MCF 10A (cell line): ENCODE measurements at regions of chr2 and their contacts with region 1.

Region 1: GRCh38 chr2:112726497-112727190 is 5.8 kb downstream of the NT5DC4 start:
- DNase-seq: peak; percentile 94
- H3K4me3 Mint-ChIP-seq: no peak overlapping the region
- H3K27ac Mint-ChIP-seq: no peak overlapping the region
- H3K4me1 Mint-ChIP-seq: no peaks in the 10 kb centered on the region
- H3K27me3 Mint-ChIP-seq: no peaks in the 10 kb centered on the region
- CTCF ChIP-seq: peak; percentile 98

Region 2: DNA sequence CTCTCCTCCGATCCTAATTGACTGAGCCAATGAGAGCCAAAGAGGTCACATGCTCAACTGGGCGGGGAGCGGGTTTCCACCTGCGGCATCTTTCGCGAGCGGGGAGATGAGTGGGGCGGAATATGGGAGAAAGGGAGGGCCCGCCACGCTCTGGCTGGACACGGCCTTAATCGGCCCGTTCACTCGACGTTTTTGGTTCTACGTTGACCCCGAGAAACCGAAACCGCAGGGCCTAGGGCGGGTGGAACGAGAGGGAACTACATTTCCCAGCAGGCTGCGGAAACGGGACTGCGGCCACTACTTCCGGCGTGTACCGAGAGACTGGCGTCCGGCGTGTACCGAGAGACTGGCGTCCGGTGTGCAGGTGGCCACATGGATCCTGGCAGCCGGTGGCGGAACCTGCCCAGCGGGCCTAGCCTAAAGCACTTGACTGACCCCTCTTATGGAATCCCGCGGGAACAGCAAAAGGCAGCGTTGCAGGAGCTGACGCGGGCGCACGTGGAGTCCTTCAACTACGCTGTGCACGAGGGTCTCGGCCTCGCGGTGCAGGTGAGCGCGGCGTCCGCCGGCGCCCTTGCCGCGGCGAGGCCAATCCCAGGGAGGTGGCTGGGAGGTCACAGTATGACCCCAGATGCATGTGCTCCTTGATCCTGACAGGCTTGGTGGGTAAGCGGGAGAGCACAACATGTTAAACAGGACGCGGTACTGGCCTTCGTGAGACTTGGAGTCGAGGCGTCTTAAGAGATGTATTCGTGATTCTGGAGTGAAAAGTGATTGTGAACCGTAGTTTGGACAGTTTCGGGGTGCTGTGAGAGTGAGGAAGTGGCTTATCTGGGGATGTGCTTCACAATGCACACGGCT is 184.3 kb before region 1 on chr2 and contains the start of gene POLR1B:
- CTCF ChIA-PET with region 1: interaction called, 3 read pairs
- POLR2A ChIA-PET with region 1: no interaction called
- intact Hi-C with region 1: loop called (anchors 2 kb)
- DNase-seq: peak; percentile 90
- H3K4me3 Mint-ChIP-seq: no peak within 1 kb of the TSS
- H3K27ac Mint-ChIP-seq: no peak within 1 kb of the TSS
- H3K4me1 Mint-ChIP-seq: peaks cover 11% of the 10 kb centered on the region
- H3K27me3 Mint-ChIP-seq: no peaks in the 10 kb centered on the region
- CTCF ChIP-seq: no peak
- total RNA-seq, gene POLR1B: 51.6 and 74.0 TPM in 2 replicates

Region 3: GRCh38 chr2:112606488-112606902 is 120.1 kb before region 1 on chr2:
- CTCF ChIA-PET with region 1: interaction called, 210 read pairs
- POLR2A ChIA-PET with region 1: interaction called, 15 read pairs
- intact Hi-C with region 1: no loop called
- DNase-seq: no peak
- H3K4me3 Mint-ChIP-seq: no peak overlapping the region
- H3K27ac Mint-ChIP-seq: no peak overlapping the region
- H3K4me1 Mint-ChIP-seq: peaks cover 4% of the 10 kb centered on the region
- H3K27me3 Mint-ChIP-seq: no peaks in the 10 kb centered on the region
- CTCF ChIP-seq: no peak

Region 4: GRCh38 chr2:112645310-112646101 is 81.1 kb before region 1 on chr2 and contains the start of gene SLC20A1:
- CTCF ChIA-PET with region 1: interaction called, 50 read pairs
- POLR2A ChIA-PET with region 1: interaction called, 49 read pairs
- intact Hi-C with region 1: loop called (anchors 1 kb)
- DNase-seq: peak; percentile 93
- H3K4me3 Mint-ChIP-seq: peak within 1 kb of the TSS; percentile 77
- H3K27ac Mint-ChIP-seq: peak within 1 kb of the TSS; percentile 94
- H3K4me1 Mint-ChIP-seq: peaks cover 48% of the 10 kb centered on the region
- H3K27me3 Mint-ChIP-seq: no peaks in the 10 kb centered on the region
- CTCF ChIP-seq: peak; percentile 37
- total RNA-seq, gene SLC20A1: 242 and 295 TPM in 2 replicates

Region 5: DNA sequence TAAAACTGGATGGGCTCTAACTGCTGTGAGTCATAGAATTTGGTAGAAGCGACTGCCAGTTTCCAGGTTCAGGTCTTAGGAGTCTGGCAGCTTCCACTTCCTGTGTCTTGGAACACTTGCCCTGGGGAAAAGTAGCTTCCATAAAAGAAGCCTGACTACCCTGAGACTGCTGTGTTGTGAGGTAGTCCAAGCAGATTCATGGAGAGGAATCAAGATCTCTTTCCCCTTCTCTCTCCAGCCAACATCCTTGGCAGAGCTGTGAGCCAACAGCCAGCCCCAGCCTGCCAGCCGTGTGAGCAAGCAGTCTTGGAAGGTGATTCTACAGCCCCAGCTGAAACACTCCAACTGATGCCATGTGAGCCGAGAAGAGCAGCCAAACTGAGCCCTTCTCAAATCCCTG is 47.2 kb before region 1 on chr2:
- CTCF ChIA-PET with region 1: interaction called, 11 read pairs
- POLR2A ChIA-PET with region 1: no interaction called
- intact Hi-C with region 1: no loop called
- DNase-seq: peak; percentile 80
- H3K4me3 Mint-ChIP-seq: no peak overlapping the region
- H3K27ac Mint-ChIP-seq: peak overlapping the region; percentile 39
- H3K4me1 Mint-ChIP-seq: peaks cover 10% of the 10 kb centered on the region
- H3K27me3 Mint-ChIP-seq: no peaks in the 10 kb centered on the region
- CTCF ChIP-seq: no peak

Region 6: GRCh38 chr2:112737542-112738232 is 11.0 kb after region 1 on chr2:
- CTCF ChIA-PET with region 1: interaction called, 27 read pairs
- POLR2A ChIA-PET with region 1: interaction called, 8 read pairs
- intact Hi-C with region 1: no loop called
- DNase-seq: no peak
- H3K4me3 Mint-ChIP-seq: no peak overlapping the region
- H3K27ac Mint-ChIP-seq: no peak overlapping the region
- H3K4me1 Mint-ChIP-seq: no peaks in the 10 kb centered on the region
- H3K27me3 Mint-ChIP-seq: no peaks in the 10 kb centered on the region
- CTCF ChIP-seq: no peak

Region 7: GRCh38 chr2:112927745-112928144 is 201.1 kb after region 1 on chr2:
- CTCF ChIA-PET with region 1: no interaction called
- POLR2A ChIA-PET with region 1: no interaction called
- intact Hi-C with region 1: no loop called
- DNase-seq: no peak
- H3K4me3 Mint-ChIP-seq: no peak overlapping the region
- H3K27ac Mint-ChIP-seq: no peak overlapping the region
- H3K4me1 Mint-ChIP-seq: no peaks in the 10 kb centered on the region
- H3K27me3 Mint-ChIP-seq: no peaks in the 10 kb centered on the region
- CTCF ChIP-seq: no peak